Activated naive CD4-positive, alpha-beta T cell treated with anti-CD3 and anti-CD28 coated beads for 36 hours (primary cell): ENCODE measurements at regions of chr21 and their contacts with region 1.

Region 1: GRCh38 chr21:45923146-45923545 is 58.4 kb upstream of the COL6A1 start:
- DNase-seq: peak; percentile 79
- H3K4me3 Mint-ChIP-seq: no peak overlapping the region
- H3K27ac Mint-ChIP-seq: no peak overlapping the region
- H3K4me1 Mint-ChIP-seq: peaks cover 22% of the 10 kb centered on the region
- H3K27me3 Mint-ChIP-seq: no peaks in the 10 kb centered on the region

Region 2: GRCh38 chr21:45827302-45827692 is 95.8 kb before region 1 on chr21:
- CTCF ChIA-PET with region 1: interaction called, 3 read pairs
- intact Hi-C with region 1: loop called (anchors 2 kb)
- DNase-seq: peak; percentile 45
- H3K4me3 Mint-ChIP-seq: no peak overlapping the region
- H3K27ac Mint-ChIP-seq: peak overlapping the region; percentile 21
- H3K4me1 Mint-ChIP-seq: peaks cover 12% of the 10 kb centered on the region
- H3K27me3 Mint-ChIP-seq: no peaks in the 10 kb centered on the region